ENCODE measurements at regions of chr6 and their contacts with region 1.

Region 1: GRCh38 chr6:45714741-45715507 is 300.7 kb downstream of the CLIC5 start:
- DNase-seq: peak; percentile 87
- H3K4me3 ChIP-seq: no peak overlapping the region
- H3K27ac ChIP-seq: no peak overlapping the region
- H3K4me1 ChIP-seq: peaks cover 5% of the 10 kb centered on the region
- H3K27me3 ChIP-seq: no peaks in the 10 kb centered on the region
- CTCF ChIP-seq: peak; percentile 84

Region 2: GRCh38 chr6:44630125-44631028 is 1084.5 kb before region 1 on chr6:
- CTCF ChIA-PET with region 1: interaction called, 12 read pairs
- POLR2A ChIA-PET with region 1: no interaction called
- intact Hi-C with region 1: no loop called
- DNase-seq: peak; percentile 51
- H3K4me3 ChIP-seq: no peak overlapping the region
- H3K27ac ChIP-seq: no peak overlapping the region
- H3K4me1 ChIP-seq: no peaks in the 10 kb centered on the region
- H3K27me3 ChIP-seq: no peaks in the 10 kb centered on the region
- CTCF ChIP-seq: peak; percentile 47

Region 3: DNA sequence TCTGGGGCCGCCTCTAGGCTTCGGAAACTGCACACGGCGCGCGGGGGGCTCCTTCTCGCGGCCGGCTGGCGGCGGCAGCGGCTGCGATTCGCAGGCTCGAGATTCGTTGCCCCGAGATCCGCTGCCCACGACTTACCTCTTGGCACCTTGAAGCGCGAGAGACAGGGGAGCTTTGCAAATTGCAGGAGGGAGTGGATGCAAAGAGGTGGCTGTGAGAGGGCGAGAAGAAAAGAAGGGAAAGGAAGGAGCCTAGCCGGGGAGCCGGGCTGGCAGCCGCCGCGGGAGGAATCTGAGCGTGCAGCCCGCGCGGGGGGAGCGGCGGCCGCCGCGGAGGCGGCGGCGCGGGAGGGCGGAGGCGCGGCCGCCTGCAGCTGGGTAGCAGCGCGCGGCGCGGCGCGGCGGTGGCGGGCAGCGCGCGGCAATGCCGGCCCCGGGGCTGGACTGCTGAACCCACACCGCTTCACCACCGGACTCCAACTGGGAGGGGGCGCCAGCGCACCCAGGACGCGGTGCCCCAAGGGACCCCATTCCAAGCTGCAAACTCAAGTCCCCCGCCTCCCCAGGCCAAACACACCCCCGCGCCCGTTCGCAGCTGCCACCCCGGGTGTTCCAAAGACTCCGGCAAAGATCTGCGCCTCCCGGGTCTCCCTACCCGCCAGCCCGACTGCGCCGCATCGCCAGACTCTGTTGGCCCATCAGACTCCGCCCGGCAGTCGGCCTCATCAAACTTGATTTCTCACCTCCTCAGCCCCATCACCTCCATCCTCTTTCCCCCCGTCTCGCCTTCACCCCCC is 293.0 kb before region 1 on chr6:
- CTCF ChIA-PET with region 1: interaction called, 7 read pairs
- POLR2A ChIA-PET with region 1: no interaction called
- intact Hi-C with region 1: loop called (anchors 5 kb)
- DNase-seq: peak; percentile 72
- H3K4me3 ChIP-seq: peak overlapping the region; percentile 86
- H3K27ac ChIP-seq: peak overlapping the region; percentile 49
- H3K4me1 ChIP-seq: peaks cover 13% of the 10 kb centered on the region
- H3K27me3 ChIP-seq: peaks cover 11% of the 10 kb centered on the region
- CTCF ChIP-seq: peak; percentile 55